ENCODE measurements at regions of chr14 and their contacts with region 1.

Region 1: GRCh38 chr14:63663430-63664341 is 22.0 kb upstream of the WDR89 start:
- DNase-seq: no peak
- ATAC-seq: no peak
- H3K4me3 ChIP-seq: no peak overlapping the region
- H3K4me3 Mint-ChIP-seq: no peak overlapping the region
- H3K27ac ChIP-seq: no peak overlapping the region
- H3K27ac Mint-ChIP-seq: no peak overlapping the region
- H3K4me1 ChIP-seq: no peaks in the 10 kb centered on the region
- H3K4me1 Mint-ChIP-seq: no peaks in the 10 kb centered on the region
- H3K27me3 ChIP-seq: no peaks in the 10 kb centered on the region
- H3K27me3 Mint-ChIP-seq: no peaks in the 10 kb centered on the region
- CTCF ChIP-seq: no peak

Region 2: DNA sequence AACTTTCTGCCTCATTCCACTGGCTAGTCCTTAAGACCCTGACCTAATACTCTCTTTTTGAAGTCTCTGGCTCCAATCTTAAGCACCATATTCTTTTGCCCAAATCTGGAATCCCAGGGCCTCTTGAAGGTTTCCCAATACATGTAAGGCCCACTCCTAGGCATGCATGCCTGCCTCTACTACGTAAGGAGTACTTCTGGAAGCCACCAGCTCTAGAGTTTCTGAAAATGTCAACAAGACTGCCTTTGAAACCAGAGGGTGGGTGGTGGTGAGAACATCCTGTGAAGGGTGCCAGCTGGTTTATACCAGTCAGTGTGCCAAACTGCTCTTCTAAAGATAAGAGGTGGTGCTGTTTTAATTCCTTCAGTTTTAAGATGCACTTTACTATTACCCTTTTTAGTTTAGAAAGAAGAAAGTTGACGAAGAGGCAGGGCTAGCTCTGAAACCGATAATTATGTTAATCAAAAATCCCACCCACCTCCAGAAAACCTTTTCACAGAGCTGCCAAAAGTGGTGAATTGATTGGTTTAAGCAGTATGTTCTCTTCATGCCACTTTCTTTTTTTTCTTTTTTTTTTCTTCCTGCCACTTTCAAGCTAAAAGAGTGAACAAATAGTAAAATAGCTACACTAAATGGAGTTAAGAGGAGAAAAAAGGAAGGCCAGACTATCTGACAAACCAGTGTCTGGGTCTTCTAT is 13.3 kb before region 1 on chr14:
- CTCF ChIA-PET with region 1: interaction called, 7 read pairs
- POLR2A ChIA-PET with region 1: interaction called, 14 read pairs
- intact Hi-C with region 1: no loop called
- DNase-seq: peak; percentile 19 to 87 (median 65)
- ATAC-seq: peak; percentile 96
- H3K4me3 ChIP-seq: peak overlapping the region; percentile 10 to 26
- H3K4me3 Mint-ChIP-seq: peak overlapping the region; percentile 69
- H3K27ac ChIP-seq: peak overlapping the region; percentile 78 to 93
- H3K27ac Mint-ChIP-seq: peak overlapping the region; percentile 100
- H3K4me1 ChIP-seq: peaks cover 40% of the 10 kb centered on the region
- H3K4me1 Mint-ChIP-seq: peaks cover 52% of the 10 kb centered on the region
- H3K27me3 ChIP-seq: no peaks in the 10 kb centered on the region
- H3K27me3 Mint-ChIP-seq: no peaks in the 10 kb centered on the region
- CTCF ChIP-seq: no peak

Region 3: DNA sequence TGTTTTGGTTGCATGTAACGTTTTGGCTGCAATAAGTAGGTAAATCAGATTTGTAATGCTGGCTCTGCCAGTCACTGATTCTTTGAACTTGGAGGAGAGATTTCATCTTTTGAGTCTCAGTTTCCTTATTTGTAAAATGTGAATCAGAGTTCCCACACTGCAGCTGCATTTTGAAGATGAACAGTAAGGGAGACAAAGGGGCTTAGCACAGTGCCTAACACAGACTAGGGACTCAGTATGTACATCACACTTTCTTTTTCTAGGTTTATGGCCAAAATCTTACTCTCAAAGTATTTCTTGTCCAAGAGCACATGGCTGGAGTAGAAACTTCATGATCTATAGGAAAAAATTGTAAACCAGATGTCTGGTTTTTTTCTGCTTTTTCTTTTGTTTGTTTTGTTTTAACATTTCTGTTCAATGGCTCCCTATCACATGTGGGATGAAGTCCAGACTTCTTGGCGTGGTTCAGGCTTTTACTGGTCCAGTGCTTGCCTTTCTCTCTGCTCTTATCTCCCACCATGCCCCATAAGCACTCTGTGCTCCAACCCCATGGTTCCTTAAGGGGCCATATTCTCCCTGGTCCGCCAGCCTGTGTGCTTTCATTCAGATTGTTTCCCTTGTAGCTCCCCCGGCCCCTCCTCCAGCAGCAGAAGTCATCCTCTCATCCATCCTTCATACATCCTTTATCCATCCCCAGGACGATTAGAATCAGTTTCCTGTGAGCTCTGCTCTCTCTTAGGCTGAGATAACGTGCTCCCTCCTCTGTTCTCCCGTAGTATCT is 247.1 kb after region 1 on chr14:
- CTCF ChIA-PET with region 1: no interaction called
- POLR2A ChIA-PET with region 1: no interaction called
- intact Hi-C with region 1: no loop called
- DNase-seq: no peak
- ATAC-seq: no peak
- H3K4me3 ChIP-seq: no peak overlapping the region
- H3K4me3 Mint-ChIP-seq: no peak overlapping the region
- H3K27ac ChIP-seq: no peak overlapping the region
- H3K27ac Mint-ChIP-seq: peak overlapping the region; percentile 2
- H3K4me1 ChIP-seq: peaks cover 4% of the 10 kb centered on the region
- H3K4me1 Mint-ChIP-seq: peaks cover 41% of the 10 kb centered on the region
- H3K27me3 ChIP-seq: no peaks in the 10 kb centered on the region
- H3K27me3 Mint-ChIP-seq: no peaks in the 10 kb centered on the region
- CTCF ChIP-seq: no peak

Region 4: GRCh38 chr14:64388533-64389467 is 725.1 kb after region 1 on chr14:
- CTCF ChIA-PET with region 1: no interaction called
- POLR2A ChIA-PET with region 1: no interaction called
- intact Hi-C with region 1: no loop called
- DNase-seq: peak in 2 of 9 experiments; percentile 7 to 17
- ATAC-seq: no peak
- H3K4me3 ChIP-seq: peak overlapping the region; percentile 79 to 80
- H3K4me3 Mint-ChIP-seq: peak overlapping the region; percentile 99
- H3K27ac ChIP-seq: peak overlapping the region; percentile 33 to 50
- H3K27ac Mint-ChIP-seq: peak overlapping the region; percentile 95
- H3K4me1 ChIP-seq: peaks cover 20% of the 10 kb centered on the region
- H3K4me1 Mint-ChIP-seq: peaks cover 42% of the 10 kb centered on the region
- H3K27me3 ChIP-seq: no peaks in the 10 kb centered on the region
- H3K27me3 Mint-ChIP-seq: no peaks in the 10 kb centered on the region
- CTCF ChIP-seq: no peak